HEK293 (cell line): ENCODE measurements at regions of chr2 and their contacts with region 1.

Region 1: GRCh38 chr2:235779444-235779896 is 285.6 kb downstream of the AGAP1 start:
- H3K4me3 ChIP-seq: no peak overlapping the region
- H3K27ac ChIP-seq: no peak overlapping the region
- H3K4me1 ChIP-seq: peaks cover 12% of the 10 kb centered on the region
- CTCF ChIP-seq: peak; percentile 55; the same call in 1 of the 2 replicates

Region 2: DNA sequence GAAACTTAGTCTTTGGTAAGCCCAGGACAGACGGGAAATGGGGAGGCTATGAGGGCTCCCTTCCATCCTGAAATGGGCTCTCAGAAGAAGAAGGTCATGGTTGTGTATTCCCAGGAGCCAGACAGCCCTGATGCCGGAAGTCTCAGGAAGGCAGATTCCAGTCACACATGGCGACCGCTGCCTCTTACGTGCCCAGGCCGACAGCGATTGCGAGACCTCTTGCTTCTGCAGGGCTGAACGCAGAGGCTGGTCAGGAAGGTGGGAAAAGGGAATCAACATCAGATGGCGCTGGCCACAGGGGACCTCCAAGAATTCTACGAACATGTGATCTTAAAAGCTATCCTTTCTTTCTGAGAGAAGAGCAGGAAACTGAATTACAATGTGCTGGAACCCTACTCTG is 850.5 kb before region 1 on chr2:
- CTCF ChIA-PET with region 1: no interaction called
- POLR2A ChIA-PET with region 1: no interaction called
- H3K4me3 ChIP-seq: no peak overlapping the region
- H3K27ac ChIP-seq: no peak overlapping the region
- H3K4me1 ChIP-seq: no peaks in the 10 kb centered on the region
- CTCF ChIP-seq: no peak

Region 3: DNA sequence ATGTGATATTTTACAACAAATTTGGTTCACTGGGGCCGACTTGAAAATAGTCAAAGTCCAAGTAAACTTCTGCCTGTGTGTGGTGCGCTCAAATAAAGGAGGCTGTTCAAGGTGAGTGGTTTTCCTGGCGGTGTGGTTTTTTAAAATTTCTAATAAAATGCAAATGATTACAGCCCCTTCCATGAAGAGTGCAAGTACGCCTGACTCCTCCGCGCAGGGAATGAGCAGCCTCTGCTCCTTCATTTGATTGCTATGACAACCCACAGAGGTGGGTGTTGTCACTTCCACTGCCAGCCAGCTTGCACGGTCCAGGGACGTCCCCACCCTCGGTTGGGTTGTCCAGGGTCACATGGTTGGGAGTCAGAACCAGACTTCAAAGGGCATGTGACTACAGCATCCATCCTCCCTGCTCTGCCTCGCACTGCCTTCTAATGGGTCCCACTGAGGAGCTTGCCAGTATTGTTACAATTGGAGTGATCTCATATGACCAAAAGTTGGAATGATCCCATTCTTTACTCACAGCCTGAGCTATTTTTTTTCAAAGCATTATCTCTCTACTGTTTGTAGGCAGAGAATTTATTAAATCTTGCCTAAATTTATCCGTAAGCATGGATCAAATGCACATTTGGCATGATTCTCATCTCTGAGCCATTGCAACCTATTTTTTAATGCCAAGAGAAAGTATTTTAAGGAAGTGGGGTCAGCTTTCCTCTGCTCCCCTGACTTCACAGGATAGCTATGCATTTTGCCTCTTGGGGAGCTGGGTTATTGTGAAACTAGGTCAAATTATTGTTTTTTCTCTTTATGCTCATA is 164.4 kb before region 1 on chr2:
- CTCF ChIA-PET with region 1: no interaction called
- POLR2A ChIA-PET with region 1: no interaction called
- H3K4me3 ChIP-seq: no peak overlapping the region
- H3K27ac ChIP-seq: no peak overlapping the region
- H3K4me1 ChIP-seq: 0 out of 2 replicates have a peak, but pooled peaks cover 2% of the 10 kb centered on the region
- CTCF ChIP-seq: no peak

Region 4: GRCh38 chr2:235739704-235740415 is 39.6 kb before region 1 on chr2:
- CTCF ChIA-PET with region 1: no interaction called
- POLR2A ChIA-PET with region 1: no interaction called
- H3K4me3 ChIP-seq: no peak overlapping the region
- H3K27ac ChIP-seq: no peak overlapping the region
- H3K4me1 ChIP-seq: no peaks in the 10 kb centered on the region
- CTCF ChIP-seq: no peak

Region 5: GRCh38 chr2:235766278-235766677 is 13.2 kb before region 1 on chr2:
- CTCF ChIA-PET with region 1: interaction called, 25 read pairs
- POLR2A ChIA-PET with region 1: interaction called, 3 read pairs
- H3K4me3 ChIP-seq: no peak overlapping the region
- H3K27ac ChIP-seq: no peak overlapping the region
- H3K4me1 ChIP-seq: no peaks in the 10 kb centered on the region
- CTCF ChIP-seq: no peak; the same call in 1 of the 2 replicates

Region 6: DNA sequence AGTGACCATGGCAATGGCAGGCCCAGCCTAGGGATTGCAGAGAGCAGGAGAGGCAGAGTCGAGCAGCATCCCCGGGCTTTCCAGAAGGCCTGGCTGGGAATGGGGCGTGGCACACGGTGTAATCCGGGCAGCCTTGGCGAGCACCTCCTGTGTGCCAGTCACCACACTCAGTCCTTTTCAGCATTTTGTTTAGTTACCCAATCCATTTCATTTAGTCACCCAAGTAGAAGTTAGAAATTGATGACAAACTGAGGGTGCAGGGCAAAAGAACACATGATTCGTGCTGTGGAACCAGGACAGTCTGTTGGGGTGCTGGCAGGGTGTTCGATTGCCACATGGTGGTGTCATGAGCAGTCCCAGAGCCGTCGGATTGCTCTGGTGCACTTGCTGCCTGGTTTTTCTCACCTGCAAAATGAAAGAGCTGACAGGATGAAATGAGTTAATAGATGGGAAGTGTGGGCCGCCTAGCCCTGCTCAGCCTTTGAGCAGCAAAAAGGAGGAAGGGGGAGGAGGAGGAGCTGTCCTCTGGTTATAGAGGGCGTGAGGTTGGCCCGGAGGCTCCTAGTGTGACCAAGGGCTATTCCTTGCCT is 13.8 kb after region 1 on chr2:
- CTCF ChIA-PET with region 1: interaction called, 31 read pairs
- POLR2A ChIA-PET with region 1: no interaction called
- H3K4me3 ChIP-seq: no peak overlapping the region
- H3K27ac ChIP-seq: no peak overlapping the region
- H3K4me1 ChIP-seq: no peaks in the 10 kb centered on the region
- CTCF ChIP-seq: no peak

Region 7: GRCh38 chr2:236309669-236310029 is 530.2 kb after region 1 on chr2:
- CTCF ChIA-PET with region 1: interaction called, 16 read pairs
- POLR2A ChIA-PET with region 1: no interaction called
- H3K4me3 ChIP-seq: no peak overlapping the region
- H3K27ac ChIP-seq: no peak overlapping the region
- H3K4me1 ChIP-seq: no peaks in the 10 kb centered on the region
- CTCF ChIP-seq: no peak; the same call in 1 of the 2 replicates